IMR-90 (cell line): ENCODE measurements at regions of chr6 and their contacts with region 1.

Region 1: GRCh38 chr6:145214570-145214969 is 520.8 kb downstream of the EPM2A start:
- DNase-seq: peak; percentile 39
- ATAC-seq: no peak
- H3K4me3 ChIP-seq: no peak overlapping the region
- H3K27ac ChIP-seq: no peak overlapping the region
- H3K4me1 ChIP-seq: no peaks in the 10 kb centered on the region
- H3K27me3 ChIP-seq: no peaks in the 10 kb centered on the region
- CTCF ChIP-seq: peak; percentile 63
- POLR2A ChIP-seq: no peak
- RAD21 ChIP-seq: peak; percentile 72

Region 2: DNA sequence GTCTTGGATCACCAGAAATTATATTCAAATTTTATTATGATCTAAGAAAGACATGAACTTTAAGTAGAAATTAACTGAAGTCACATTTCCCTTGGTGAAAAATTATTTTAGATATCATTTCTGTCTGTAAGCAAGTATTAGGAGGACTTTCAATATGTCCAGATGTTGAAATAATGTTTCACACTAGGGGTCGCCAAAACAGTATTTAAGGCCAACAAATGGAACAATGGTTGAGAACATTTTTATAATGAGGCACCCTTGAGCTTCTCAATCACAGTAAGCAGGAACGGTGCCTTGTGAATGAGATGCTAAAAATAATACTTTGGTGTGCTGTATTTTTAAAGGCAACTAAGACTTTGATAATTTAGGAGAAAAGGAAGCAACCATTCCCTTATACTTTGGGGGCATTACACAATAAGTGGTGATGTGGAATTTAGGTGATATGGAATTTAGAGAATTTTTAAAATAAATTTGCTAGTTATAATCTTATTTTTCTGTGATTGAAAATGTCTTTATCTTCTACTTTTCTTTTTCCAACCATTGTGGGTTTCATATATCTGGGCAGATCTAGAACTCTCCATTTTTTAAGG is 1109.6 kb before region 1 on chr6:
- CTCF ChIA-PET with region 1: no interaction called
- POLR2A ChIA-PET with region 1: no interaction called
- dilution Hi-C with region 1: no loop called
- in situ Hi-C with region 1: loop called (anchors 25 kb)
- intact Hi-C with region 1: no loop called
- DNase-seq: peak; percentile 79
- ATAC-seq: peak; percentile 77
- H3K4me3 ChIP-seq: no peak overlapping the region
- H3K27ac ChIP-seq: no peak overlapping the region
- H3K4me1 ChIP-seq: no peaks in the 10 kb centered on the region
- H3K27me3 ChIP-seq: peaks cover 3% of the 10 kb centered on the region
- CTCF ChIP-seq: peak; percentile 86
- POLR2A ChIP-seq: no peak
- RAD21 ChIP-seq: peak; percentile 91

Region 3: DNA sequence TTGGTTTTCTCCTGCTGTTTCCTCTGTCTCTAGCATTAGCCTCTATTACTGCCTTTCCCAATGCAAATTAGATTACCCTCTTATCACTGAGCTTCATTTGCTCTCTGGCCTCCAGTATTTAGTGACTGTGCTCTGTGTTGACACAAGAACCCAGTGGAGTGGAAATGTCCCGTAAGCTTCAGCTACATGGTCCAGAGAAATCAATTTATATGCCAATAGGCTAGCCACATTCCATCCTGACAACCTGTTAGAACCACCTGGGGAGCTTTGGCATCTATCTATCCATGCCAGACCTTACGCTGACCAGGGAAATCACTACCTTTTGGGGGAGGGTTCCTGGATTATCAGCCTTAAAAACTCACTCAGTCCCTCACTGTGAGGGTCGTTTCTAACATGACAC is 469.9 kb before region 1 on chr6:
- CTCF ChIA-PET with region 1: no interaction called
- POLR2A ChIA-PET with region 1: no interaction called
- dilution Hi-C with region 1: no loop called
- in situ Hi-C with region 1: no loop called
- intact Hi-C with region 1: no loop called
- DNase-seq: no peak
- ATAC-seq: no peak
- H3K4me3 ChIP-seq: no peak overlapping the region
- H3K27ac ChIP-seq: no peak overlapping the region
- H3K4me1 ChIP-seq: peaks cover 2% of the 10 kb centered on the region; the same call in 1 of the 2 replicates
- H3K27me3 ChIP-seq: no peaks in the 10 kb centered on the region
- CTCF ChIP-seq: no peak
- POLR2A ChIP-seq: no peak
- RAD21 ChIP-seq: no peak

Region 4: GRCh38 chr6:144758626-144759025 is 455.9 kb before region 1 on chr6:
- CTCF ChIA-PET with region 1: no interaction called
- POLR2A ChIA-PET with region 1: no interaction called
- dilution Hi-C with region 1: no loop called
- in situ Hi-C with region 1: no loop called
- intact Hi-C with region 1: loop called (anchors 10 kb)
- DNase-seq: peak; percentile 28
- ATAC-seq: no peak
- H3K4me3 ChIP-seq: no peak overlapping the region
- H3K27ac ChIP-seq: no peak overlapping the region
- H3K4me1 ChIP-seq: no peaks in the 10 kb centered on the region
- H3K27me3 ChIP-seq: no peaks in the 10 kb centered on the region
- CTCF ChIP-seq: no peak
- POLR2A ChIP-seq: no peak
- RAD21 ChIP-seq: no peak

Region 5: DNA sequence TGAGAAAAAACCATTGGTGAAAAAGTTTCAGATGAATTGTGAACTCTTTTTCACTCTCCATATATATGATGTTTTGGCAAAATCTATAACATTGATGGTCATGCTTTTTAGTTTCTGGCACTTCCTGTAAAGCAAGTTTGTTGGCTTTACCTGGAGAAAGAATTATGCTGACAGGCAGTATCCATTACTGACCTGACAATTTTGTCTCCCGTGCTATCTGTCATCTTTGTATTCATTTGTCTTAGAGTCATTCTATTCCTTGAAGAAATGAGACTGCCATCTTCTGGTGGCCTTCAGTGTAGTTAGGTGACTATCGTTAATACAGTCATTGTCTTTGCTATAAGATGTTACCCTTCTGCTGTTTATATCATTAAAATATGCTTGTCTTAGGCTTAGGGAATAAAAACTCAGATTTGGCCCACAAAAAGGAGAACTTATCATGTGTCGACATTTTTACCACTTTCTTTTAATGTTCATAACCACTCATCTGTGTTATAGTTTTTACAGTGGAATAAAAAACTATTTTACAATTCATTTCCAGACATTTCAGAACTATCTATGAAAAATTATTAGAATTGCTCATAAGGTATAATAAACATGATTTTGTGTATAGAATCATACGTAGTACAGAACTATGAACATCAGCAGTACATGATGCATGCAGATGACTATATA is 186.3 kb before region 1 on chr6:
- CTCF ChIA-PET with region 1: no interaction called
- POLR2A ChIA-PET with region 1: no interaction called
- dilution Hi-C with region 1: no loop called
- in situ Hi-C with region 1: no loop called
- intact Hi-C with region 1: loop called (anchors 5 kb)
- DNase-seq: peak; percentile 33
- ATAC-seq: peak; percentile 80; the same call in 1 of the 2 replicates
- H3K4me3 ChIP-seq: no peak overlapping the region
- H3K27ac ChIP-seq: no peak overlapping the region
- H3K4me1 ChIP-seq: no peaks in the 10 kb centered on the region
- H3K27me3 ChIP-seq: no peaks in the 10 kb centered on the region
- CTCF ChIP-seq: peak; percentile 52
- POLR2A ChIP-seq: no peak
- RAD21 ChIP-seq: peak; percentile 54

Region 6: DNA sequence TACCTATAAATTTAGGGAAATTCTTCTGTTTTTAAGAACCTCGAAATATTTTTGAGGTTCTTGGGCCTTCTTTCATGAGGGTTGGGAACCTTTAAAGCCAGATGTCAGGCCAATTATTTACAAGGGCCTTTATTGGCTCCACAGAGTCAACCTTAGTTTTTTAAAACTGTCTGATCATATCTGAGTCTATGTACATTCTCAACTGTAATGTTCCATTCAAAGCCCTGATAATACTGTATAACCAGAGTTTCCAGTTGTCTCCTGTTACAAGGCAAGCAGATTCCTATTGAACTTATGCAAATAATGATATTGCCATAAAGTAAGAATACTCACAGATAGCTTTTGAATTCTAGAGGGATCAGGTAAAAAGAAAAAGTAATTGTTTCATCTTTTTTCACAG is 24.7 kb before region 1 on chr6:
- CTCF ChIA-PET with region 1: no interaction called
- POLR2A ChIA-PET with region 1: no interaction called
- dilution Hi-C with region 1: no loop called
- in situ Hi-C with region 1: no loop called
- intact Hi-C with region 1: no loop called
- DNase-seq: no peak
- ATAC-seq: no peak
- H3K4me3 ChIP-seq: no peak overlapping the region
- H3K27ac ChIP-seq: no peak overlapping the region
- H3K4me1 ChIP-seq: no peaks in the 10 kb centered on the region
- H3K27me3 ChIP-seq: no peaks in the 10 kb centered on the region
- CTCF ChIP-seq: no peak
- POLR2A ChIP-seq: no peak
- RAD21 ChIP-seq: no peak

Region 7: GRCh38 chr6:145704143-145704781 is 489.7 kb after region 1 on chr6:
- CTCF ChIA-PET with region 1: no interaction called
- POLR2A ChIA-PET with region 1: no interaction called
- dilution Hi-C with region 1: no loop called
- in situ Hi-C with region 1: no loop called
- intact Hi-C with region 1: loop called (anchors 5 kb)
- DNase-seq: peak; percentile 38
- ATAC-seq: no peak
- H3K4me3 ChIP-seq: no peak overlapping the region
- H3K27ac ChIP-seq: no peak overlapping the region
- H3K4me1 ChIP-seq: peaks cover 2% of the 10 kb centered on the region; the same call in 1 of the 2 replicates
- H3K27me3 ChIP-seq: no peaks in the 10 kb centered on the region
- CTCF ChIP-seq: peak; percentile 54
- POLR2A ChIP-seq: no peak
- RAD21 ChIP-seq: peak; percentile 54